SK-N-SH (cell line): ENCODE measurements at regions of chr6 and their contacts with region 1.

Region 1: GRCh38 chr6:24566020-24566767 is 71.4 kb downstream of the ALDH5A1 start:
- DNase-seq: no peak
- H3K4me3 ChIP-seq: no peak overlapping the region
- H3K27ac ChIP-seq: no peak overlapping the region
- H3K4me1 ChIP-seq: no peaks in the 10 kb centered on the region
- H3K27me3 ChIP-seq: no peaks in the 10 kb centered on the region
- CTCF ChIP-seq: no peak
- EP300 ChIP-seq: no peak
- RAD21 ChIP-seq: no peak

Region 2: DNA sequence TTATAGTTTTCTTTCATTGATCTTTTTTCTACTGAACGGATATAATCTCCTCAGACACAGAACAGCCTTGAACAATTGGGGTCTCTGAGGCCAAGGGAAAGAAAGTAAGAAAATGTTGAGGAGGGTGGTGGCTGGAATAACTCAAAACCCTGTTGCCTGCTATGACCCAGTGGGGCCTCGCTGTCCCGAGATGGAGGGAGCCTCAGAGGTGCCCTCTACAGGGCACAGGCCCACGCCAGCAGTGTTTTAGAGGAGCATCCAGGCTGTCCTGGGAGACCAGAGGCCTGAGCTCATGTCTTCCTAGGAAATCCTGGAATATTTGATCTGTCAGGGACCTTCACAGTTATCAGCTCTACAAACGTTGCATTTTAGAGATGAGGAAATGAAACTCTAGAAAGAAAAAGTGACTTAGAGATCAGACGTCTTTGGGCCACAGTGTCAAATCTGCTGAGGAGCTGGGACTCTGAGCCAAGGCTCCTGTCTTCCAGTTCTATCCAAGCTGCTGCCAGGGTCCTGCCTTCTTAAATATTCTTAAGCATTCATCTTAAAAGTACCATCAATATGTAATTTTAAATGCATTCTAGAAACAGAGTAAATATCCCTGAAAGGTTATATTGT is 45.2 kb before region 1 on chr6:
- CTCF ChIA-PET with region 1: interaction called, 12 read pairs
- POLR2A ChIA-PET with region 1: no interaction called
- DNase-seq: peak; percentile 63
- H3K4me3 ChIP-seq: no peak overlapping the region
- H3K27ac ChIP-seq: no peak overlapping the region
- H3K4me1 ChIP-seq: no peaks in the 10 kb centered on the region
- H3K27me3 ChIP-seq: no peaks in the 10 kb centered on the region
- CTCF ChIP-seq: peak; percentile 71
- EP300 ChIP-seq: no peak
- RAD21 ChIP-seq: peak; percentile 63